ENCODE measurements at regions of chr21 and their contacts with region 1.

Region 1: DNA sequence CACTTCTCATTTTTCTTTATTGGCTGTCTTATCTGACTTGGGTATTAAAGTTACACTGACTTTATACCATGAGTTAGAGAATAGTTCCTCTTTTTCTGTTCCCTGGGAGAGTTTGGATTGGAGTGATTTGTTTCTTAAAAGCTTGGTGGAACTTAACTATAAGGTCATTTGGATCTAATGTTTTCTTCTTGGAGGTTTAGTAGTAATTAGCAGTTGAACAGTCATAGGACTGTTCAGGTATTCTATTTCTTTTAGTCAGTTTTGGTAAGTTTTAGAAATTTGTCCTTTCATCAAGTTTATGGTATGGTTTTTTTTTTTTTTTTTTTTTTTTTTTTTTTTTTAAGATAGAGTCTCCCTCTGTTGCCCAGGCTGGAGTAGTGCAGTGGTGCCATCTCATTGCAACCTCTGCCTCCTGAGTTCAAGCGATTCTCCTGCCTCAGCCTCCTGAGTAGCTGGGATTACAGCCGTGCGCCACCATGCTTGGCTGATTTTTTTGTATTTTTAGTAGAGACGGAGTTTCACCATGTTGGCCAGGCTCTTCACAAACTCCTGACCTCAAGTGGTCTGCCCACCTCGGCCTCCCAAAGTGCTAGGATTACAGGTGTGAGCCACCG is 6.3 kb downstream of the TTC3 start:
- DNase-seq: no peak
- H3K4me3 Mint-ChIP-seq: no peak overlapping the region
- H3K27ac Mint-ChIP-seq: no peak overlapping the region
- H3K4me1 Mint-ChIP-seq: peaks cover 22% of the 10 kb centered on the region
- H3K27me3 Mint-ChIP-seq: no peaks in the 10 kb centered on the region

Region 2: DNA sequence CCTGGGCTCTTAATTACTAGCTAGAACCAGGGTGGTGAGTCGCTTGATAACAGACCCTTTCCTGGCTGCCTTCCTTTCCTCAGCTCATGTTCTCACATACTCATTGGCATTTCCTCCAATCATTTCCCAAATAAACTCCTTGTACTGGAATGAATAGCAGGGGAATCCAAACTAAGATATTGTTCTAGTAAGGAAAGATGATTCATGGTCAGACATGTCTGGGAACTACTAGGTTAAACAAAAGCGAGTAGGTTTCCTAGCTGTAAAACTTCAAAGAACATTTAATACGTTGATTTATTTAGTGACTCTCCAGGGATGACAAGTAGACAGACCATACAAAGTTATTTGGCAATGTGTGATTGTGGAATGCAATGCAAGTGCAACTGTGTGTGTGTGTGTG is 958.1 kb after region 1 on chr21:
- CTCF ChIA-PET with region 1: interaction called, 10 read pairs
- POLR2A ChIA-PET with region 1: no interaction called
- DNase-seq: no peak
- H3K4me3 Mint-ChIP-seq: no peak overlapping the region
- H3K27ac Mint-ChIP-seq: no peak overlapping the region
- H3K4me1 Mint-ChIP-seq: no peaks in the 10 kb centered on the region
- H3K27me3 Mint-ChIP-seq: no peaks in the 10 kb centered on the region